PC-9 (cell line): ENCODE measurements at regions of chr10 and their contacts with region 1.

Region 1: DNA sequence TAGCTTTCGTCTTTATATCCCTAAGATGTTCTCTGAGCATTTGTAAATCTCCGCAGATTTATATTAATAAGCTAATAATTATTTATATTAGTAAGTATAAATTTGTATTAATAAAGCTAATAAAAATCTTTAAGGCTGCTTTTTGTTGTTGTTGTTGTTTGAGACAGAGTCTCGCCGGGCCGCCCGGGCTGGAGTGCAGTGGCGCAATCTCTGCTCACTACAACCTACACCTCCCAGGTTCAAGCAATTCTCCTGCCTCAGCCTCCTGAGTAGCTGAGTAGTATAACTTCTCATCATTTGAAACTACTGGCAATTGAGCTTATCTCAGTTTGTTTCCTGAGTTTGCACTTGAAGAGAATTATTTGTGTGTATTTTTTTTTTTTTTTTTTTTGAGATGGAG is 5.1 kb upstream of the ZRANB1 start:
- DNase-seq: no peak
- H3K4me3 ChIP-seq: no peak overlapping the region
- H3K27ac ChIP-seq: no peak overlapping the region
- H3K4me1 ChIP-seq: no peaks in the 10 kb centered on the region
- H3K27me3 ChIP-seq: no peaks in the 10 kb centered on the region
- CTCF ChIP-seq: no peak

Region 2: DNA sequence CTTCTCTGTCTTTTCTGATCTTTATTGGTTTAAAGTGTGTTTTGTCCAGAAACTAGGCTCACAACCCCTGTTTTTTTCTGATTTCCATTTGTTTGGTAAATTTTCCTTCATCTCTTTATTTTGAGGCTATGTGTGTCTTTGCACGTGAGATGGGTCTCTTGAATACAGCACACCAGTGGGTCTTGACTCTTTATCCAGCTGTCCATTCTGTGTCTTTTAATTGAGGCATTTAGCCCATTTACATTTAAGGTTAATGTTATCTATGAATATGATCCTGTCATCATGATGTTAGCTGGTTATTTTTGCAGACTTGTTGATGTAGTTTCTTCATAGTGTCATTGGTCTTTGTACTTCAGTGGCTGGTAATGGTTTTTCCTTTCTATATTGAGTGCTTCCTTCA is 736.1 kb after region 1 on chr10:
- CTCF ChIA-PET with region 1: no interaction called
- POLR2A ChIA-PET with region 1: interaction called, 14 read pairs
- intact Hi-C with region 1: no loop called
- DNase-seq: no peak
- H3K4me3 ChIP-seq: no peak overlapping the region
- H3K27ac ChIP-seq: no peak overlapping the region
- H3K4me1 ChIP-seq: no peaks in the 10 kb centered on the region
- H3K27me3 ChIP-seq: no peaks in the 10 kb centered on the region
- CTCF ChIP-seq: no peak